ENCODE measurements at regions of chr5 and their contacts with region 1.

Region 1: DNA sequence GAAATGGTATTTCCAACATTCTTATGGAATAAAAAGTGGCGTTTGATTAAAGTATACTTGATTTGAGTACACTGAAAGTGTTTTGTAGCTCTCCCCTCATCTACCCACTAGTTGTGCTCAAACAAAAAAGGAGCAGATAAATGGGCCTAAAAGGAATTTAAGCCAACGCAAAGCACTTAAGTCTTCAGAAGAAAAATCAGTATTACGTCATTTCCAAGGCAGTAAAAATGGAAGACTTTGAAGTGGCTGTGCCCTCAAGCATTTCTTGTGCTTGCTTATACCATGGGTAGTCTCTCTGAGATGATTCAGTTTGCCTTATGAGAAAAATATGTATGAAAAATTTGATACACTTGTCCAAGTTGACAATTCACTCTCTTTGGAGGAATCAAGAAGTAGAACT is 279.9 kb upstream of the CD180 start:
- DNase-seq: peak in 1 of 14 experiments; percentile 6
- ATAC-seq: peak; percentile 37
- H3K4me3 ChIP-seq: no peak overlapping the region
- H3K4me3 Mint-ChIP-seq: no peak overlapping the region
- H3K27ac ChIP-seq: no peak overlapping the region
- H3K27ac Mint-ChIP-seq: no peak overlapping the region
- H3K4me1 ChIP-seq: no peaks in the 10 kb centered on the region
- H3K4me1 Mint-ChIP-seq: peaks cover 8% of the 10 kb centered on the region
- H3K27me3 ChIP-seq: no peaks in the 10 kb centered on the region
- H3K27me3 Mint-ChIP-seq: no peaks in the 10 kb centered on the region
- CTCF ChIP-seq: no peak

Region 2: DNA sequence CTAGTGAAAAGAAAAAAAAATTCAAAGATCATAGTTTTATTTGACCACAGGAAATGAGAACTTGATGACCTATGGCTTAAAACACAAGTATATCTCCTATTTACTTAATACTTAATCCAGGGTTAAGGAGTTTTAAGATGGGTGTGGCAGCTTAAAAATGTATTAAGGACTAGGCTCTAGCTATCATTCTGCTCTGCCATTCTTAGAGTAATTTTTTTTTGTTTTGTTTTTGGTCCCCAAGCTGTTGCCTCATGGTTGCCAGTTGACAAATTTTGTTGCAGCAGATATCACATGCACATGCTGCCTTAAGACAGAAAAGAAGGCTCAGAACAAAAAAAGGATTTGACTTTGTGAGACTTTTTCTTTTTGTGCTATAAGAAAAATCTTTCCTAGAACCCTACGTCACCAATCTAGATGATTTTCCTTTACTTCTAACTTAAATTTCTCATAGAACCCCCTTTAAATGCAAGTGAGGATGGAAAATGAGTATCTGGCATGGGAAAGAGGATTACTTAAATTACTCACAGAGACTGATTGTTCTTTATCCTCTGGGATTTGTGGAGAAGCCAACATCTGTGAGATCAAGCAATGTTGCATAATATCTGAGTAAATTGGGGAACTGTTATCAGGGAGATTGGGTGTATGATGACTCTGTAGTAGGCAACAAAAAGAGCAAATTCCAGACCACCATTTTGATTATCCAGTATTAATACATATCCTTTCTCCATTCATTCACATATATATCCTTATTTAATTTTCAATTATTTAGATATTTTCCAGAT is 84.8 kb after region 1 on chr5:
- CTCF ChIA-PET with region 1: no interaction called
- POLR2A ChIA-PET with region 1: no interaction called
- intact Hi-C with region 1: loop called in 1 of 2 experiments (anchors 10 kb)
- DNase-seq: no peak
- ATAC-seq: no peak
- H3K4me3 ChIP-seq: no peak overlapping the region
- H3K4me3 Mint-ChIP-seq: no peak overlapping the region
- H3K27ac ChIP-seq: no peak overlapping the region
- H3K27ac Mint-ChIP-seq: no peak overlapping the region
- H3K4me1 ChIP-seq: no peaks in the 10 kb centered on the region
- H3K4me1 Mint-ChIP-seq: no peaks in the 10 kb centered on the region
- H3K27me3 ChIP-seq: no peaks in the 10 kb centered on the region
- H3K27me3 Mint-ChIP-seq: no peaks in the 10 kb centered on the region
- CTCF ChIP-seq: no peak

Region 3: GRCh38 chr5:67636091-67636490 is 159.6 kb after region 1 on chr5:
- CTCF ChIA-PET with region 1: no interaction called
- POLR2A ChIA-PET with region 1: no interaction called
- intact Hi-C with region 1: no loop called
- DNase-seq: no peak
- ATAC-seq: no peak
- H3K4me3 ChIP-seq: no peak overlapping the region
- H3K4me3 Mint-ChIP-seq: no peak overlapping the region
- H3K27ac ChIP-seq: no peak overlapping the region
- H3K27ac Mint-ChIP-seq: no peak overlapping the region
- H3K4me1 ChIP-seq: no peaks in the 10 kb centered on the region
- H3K4me1 Mint-ChIP-seq: no peaks in the 10 kb centered on the region
- H3K27me3 ChIP-seq: no peaks in the 10 kb centered on the region
- H3K27me3 Mint-ChIP-seq: no peaks in the 10 kb centered on the region
- CTCF ChIP-seq: no peak

Measured in CD4-positive, alpha-beta T cell (primary cell).